Activated T-helper 1 cell treated with anti-CD3 and anti-CD28 coated beads, Interleukin-12 subunit alpha, Interleukin-12 subunit beta, Interleukin-2, Interleukin-4 antibody, amounts not matched to agents 30 ng/mL and 10 ng/mL and 1 ng/mL, durations not matched to agents 14 hours and 24 hours and 36 hours (primary cell): ENCODE measurements at regions of chr6 and their contacts with region 1.

Region 1: DNA sequence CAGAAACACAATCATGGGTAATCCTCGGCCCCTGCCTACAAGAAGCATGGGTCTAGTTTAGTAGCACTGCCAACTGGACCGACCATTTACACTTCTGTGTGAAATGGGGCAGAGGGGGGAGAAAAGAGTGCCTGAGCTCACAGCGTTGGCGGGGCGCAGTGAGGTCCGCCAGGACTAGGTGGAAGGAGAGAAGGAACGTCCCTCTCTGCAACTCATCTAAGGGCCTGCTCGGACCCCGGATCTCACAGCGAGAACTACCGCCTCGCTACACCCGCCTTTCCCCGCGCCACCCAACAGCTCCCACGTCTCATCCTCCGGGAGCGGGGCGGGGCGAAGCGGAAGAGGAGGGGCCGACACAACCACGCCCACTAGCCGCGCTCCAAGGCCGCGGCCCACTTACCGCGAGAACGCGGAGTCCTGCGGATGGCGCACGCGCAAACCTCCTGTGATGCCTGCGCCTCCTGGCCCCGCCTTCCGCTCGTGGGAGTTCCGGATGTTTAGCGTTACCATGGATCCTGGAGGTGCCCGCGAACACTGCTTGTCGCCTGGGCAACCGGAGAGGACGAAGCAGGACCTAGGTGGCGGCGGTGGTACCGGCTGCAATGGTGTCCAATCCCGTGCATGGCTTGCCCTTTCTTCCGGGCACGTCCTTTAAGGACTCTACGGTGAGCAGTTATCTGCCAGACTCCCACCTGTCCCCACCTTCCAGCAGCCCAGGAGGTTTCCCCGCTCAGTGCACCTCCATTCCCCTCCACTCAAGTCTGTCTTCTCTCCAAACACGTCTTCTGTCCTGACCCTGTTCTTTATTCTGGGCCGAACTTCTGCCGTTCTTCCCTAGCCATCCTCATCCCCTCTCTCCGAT is at the start of gene EFHC1:
- DNase-seq: peak; percentile 98
- H3K4me3 Mint-ChIP-seq: no peak within 1 kb of the TSS
- H3K27ac Mint-ChIP-seq: no peak within 1 kb of the TSS
- H3K4me1 Mint-ChIP-seq: peaks cover 14% of the 10 kb centered on the region
- H3K27me3 Mint-ChIP-seq: peaks cover 6% of the 10 kb centered on the region
- total RNA-seq, gene EFHC1: 0.70 and 1.3 TPM in 2 replicates

Region 2: DNA sequence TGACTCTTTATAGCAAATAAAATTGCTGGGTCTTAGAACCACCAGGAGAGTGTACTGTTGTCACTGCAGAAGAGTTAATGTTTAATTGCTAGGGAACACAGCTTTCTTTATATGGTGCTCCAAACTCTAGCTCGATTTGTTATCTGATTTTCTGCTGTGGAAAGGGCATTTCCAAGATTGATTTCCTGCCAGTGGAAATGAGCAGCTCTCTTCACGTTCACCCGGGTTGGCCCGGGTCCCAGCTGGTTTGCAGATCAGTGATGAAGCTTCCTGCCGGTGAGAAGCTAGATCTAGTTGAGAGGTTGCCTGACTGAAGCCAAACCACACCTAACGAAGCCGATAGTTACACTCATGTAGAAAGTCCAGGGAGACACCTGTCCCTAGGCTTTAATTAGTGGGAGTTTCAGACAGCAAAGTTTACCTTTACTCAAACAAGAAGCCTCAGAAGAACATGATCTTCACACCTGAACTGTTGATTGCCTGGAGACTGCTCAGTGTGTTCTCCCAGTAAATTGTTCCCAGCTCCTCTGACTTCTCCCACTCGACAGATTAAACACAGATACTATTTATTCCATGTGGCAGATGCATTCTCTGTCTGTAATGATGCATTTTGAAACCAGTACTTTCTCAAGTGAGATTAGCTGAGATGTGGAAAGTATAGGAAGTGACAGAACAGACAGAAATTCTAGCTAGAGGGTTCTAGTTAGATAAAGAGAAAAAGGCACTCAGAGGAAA is 30.2 kb before region 1 on chr6:
- intact Hi-C with region 1: loop called (anchors 1 kb)
- DNase-seq: peak; percentile 45
- H3K4me3 Mint-ChIP-seq: peak overlapping the region; percentile 66
- H3K27ac Mint-ChIP-seq: peak overlapping the region; percentile 88
- H3K4me1 Mint-ChIP-seq: peaks cover 62% of the 10 kb centered on the region
- H3K27me3 Mint-ChIP-seq: peaks cover 4% of the 10 kb centered on the region

Region 3: DNA sequence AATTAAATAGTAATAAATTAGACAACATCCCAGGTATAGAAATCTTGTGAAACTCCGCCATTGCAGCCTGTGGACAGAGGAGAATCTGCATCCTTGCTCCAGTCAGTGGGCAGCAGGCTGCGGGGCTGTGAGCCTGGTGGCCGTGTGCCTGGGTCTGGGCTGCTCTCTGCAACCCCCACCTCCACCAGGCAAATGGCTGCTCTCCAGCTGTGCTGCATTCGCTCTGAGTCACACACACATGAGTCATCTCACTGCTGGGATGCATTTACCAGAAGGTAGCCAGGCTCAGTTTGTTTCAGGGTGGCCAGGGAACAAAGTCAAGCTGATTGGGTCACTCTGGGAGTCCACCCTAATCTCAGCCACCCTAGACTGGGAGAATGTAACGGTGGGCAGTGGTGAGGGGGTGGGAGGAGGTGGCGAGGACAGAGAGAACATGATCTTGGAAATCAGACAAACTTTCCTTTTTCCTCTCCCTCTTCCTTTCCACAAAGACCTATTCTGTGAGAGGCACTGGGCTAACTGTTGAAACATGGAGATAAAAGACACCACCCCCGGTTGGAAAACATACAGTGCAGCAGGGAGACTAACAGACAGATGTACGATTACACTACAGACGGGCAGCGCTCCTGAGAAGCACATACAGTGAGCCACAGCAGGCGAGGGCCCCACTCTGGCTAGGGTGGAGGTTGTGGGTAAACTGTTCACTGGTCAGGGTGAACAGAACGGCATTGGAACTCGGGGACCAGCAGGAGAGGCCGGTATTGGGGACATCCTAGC is 97.7 kb after region 1 on chr6:
- intact Hi-C with region 1: loop called (anchors 5 kb)
- DNase-seq: peak; percentile 11
- H3K4me3 Mint-ChIP-seq: no peak overlapping the region
- H3K27ac Mint-ChIP-seq: no peak overlapping the region
- H3K4me1 Mint-ChIP-seq: peaks cover 43% of the 10 kb centered on the region
- H3K27me3 Mint-ChIP-seq: no peaks in the 10 kb centered on the region

Region 4: GRCh38 chr6:52598123-52598823 is 178.2 kb after region 1 on chr6:
- intact Hi-C with region 1: loop called (anchors 1 kb)
- DNase-seq: no peak
- H3K4me3 Mint-ChIP-seq: no peak overlapping the region
- H3K27ac Mint-ChIP-seq: no peak overlapping the region
- H3K4me1 Mint-ChIP-seq: peaks cover 13% of the 10 kb centered on the region
- H3K27me3 Mint-ChIP-seq: peaks cover 4% of the 10 kb centered on the region

Region 5: DNA sequence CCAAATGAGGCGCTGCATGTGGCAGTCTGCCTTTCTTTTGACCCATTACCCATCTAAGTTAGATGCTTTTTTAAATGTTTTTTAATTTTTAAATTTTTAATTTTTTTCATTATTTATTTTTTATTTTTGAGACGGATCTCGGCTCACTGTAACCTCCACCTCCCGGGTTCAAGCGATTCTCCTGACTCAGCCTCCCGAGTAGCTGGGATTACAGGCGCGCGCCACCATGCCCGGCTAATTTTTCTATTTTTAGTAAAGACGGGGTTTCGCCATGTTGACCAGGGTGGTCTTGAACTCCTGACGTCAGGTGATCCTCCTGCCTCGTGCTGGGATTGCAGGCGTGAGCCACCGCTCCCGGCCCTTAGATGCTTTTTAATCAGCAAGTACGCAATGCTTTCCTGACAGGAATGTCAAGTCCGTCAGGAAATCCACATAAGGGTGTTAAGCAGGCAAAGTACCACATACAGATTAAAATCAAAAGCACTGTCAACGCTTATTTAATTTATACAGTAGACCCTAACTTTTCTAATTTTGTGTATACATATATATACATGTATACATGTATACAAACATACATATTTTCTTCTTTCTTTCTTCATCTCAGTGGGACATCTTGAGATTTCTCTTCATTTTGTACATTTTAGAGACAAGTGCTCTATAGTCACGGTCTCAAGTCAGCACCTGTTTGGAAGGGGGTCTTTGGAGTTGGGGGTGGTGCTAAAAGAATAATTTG is 576.0 kb after region 1 on chr6:
- intact Hi-C with region 1: loop called (anchors 1 kb)
- DNase-seq: no peak
- H3K4me3 Mint-ChIP-seq: peak overlapping the region; percentile 88
- H3K27ac Mint-ChIP-seq: peak overlapping the region; percentile 99
- H3K4me1 Mint-ChIP-seq: peaks cover 47% of the 10 kb centered on the region
- H3K27me3 Mint-ChIP-seq: peaks cover 11% of the 10 kb centered on the region